AG04450 (cell line): ENCODE measurements at regions of chr18 and their contacts with region 1.

Region 1: GRCh38 chr18:35756506-35757117 is 175.1 kb downstream of the GALNT1 start:
- DNase-seq: peak; percentile 6
- H3K4me3 ChIP-seq: no peak overlapping the region
- H3K27ac ChIP-seq: no peak overlapping the region
- H3K27me3 ChIP-seq: peaks cover 3% of the 10 kb centered on the region
- CTCF ChIP-seq: peak; percentile 83

Region 2: GRCh38 chr18:35653392-35654135 is 103.0 kb before region 1 on chr18:
- CTCF ChIA-PET with region 1: no interaction called
- POLR2A ChIA-PET with region 1: no interaction called
- DNase-seq: no peak
- H3K4me3 ChIP-seq: no peak overlapping the region
- H3K27ac ChIP-seq: no peak overlapping the region
- H3K27me3 ChIP-seq: no peaks in the 10 kb centered on the region
- CTCF ChIP-seq: no peak

Region 3: GRCh38 chr18:35740656-35741055 is 16.0 kb before region 1 on chr18:
- CTCF ChIA-PET with region 1: interaction called, 16 read pairs
- POLR2A ChIA-PET with region 1: no interaction called
- DNase-seq: no peak
- H3K4me3 ChIP-seq: no peak overlapping the region
- H3K27ac ChIP-seq: no peak overlapping the region
- H3K27me3 ChIP-seq: no peaks in the 10 kb centered on the region
- CTCF ChIP-seq: no peak

Region 4: GRCh38 chr18:35770376-35771014 is 13.9 kb after region 1 on chr18:
- CTCF ChIA-PET with region 1: interaction called, 15 read pairs
- POLR2A ChIA-PET with region 1: no interaction called
- DNase-seq: no peak
- H3K4me3 ChIP-seq: no peak overlapping the region
- H3K27ac ChIP-seq: no peak overlapping the region
- H3K27me3 ChIP-seq: no peaks in the 10 kb centered on the region
- CTCF ChIP-seq: no peak